Activated naive CD4-positive, alpha-beta T cell treated with anti-CD3 and anti-CD28 coated beads, Interleukin-2, amount 10 ng/mL, durations not matched to agents 7 days and 5 days (primary cell): ENCODE measurements at regions of chr12 and their contacts with region 1.

Region 1: GRCh38 chr12:7583571-7583970 is 80.0 kb upstream of the CD163 start:
- DNase-seq: no peak
- H3K4me3 Mint-ChIP-seq: no peak overlapping the region
- H3K27ac Mint-ChIP-seq: no peak overlapping the region
- H3K4me1 Mint-ChIP-seq: no peaks in the 10 kb centered on the region
- H3K27me3 Mint-ChIP-seq: peaks cover 19% of the 10 kb centered on the region

Region 2: DNA sequence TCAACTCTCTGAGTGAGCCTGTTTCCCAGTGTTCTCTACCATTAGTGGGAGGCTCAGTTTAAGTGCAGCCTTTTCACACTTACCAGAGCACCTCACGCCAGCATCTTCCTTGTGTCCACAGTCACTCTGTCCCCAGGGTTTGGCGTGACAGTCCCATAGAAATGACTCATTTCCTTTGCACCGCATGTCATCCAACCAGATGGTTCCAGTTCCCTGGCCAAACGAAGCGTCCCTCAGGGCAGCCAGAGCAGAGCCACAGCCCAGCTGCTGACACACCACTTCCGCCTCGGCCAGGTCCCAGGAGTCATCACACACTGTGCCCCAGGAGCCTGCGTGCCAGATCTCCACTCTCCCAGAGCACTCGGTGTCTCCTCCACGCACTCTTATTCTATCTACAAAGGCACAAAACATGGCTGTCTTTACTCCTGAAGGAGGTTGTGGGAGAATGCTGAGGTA is 214.3 kb before region 1 on chr12:
- CTCF ChIA-PET with region 1: no interaction called
- DNase-seq: no peak
- H3K4me3 Mint-ChIP-seq: no peak overlapping the region
- H3K27ac Mint-ChIP-seq: no peak overlapping the region
- H3K4me1 Mint-ChIP-seq: no peaks in the 10 kb centered on the region
- H3K27me3 Mint-ChIP-seq: peaks cover 17% of the 10 kb centered on the region

Region 3: GRCh38 chr12:7638760-7639555 is 55.4 kb after region 1 on chr12:
- CTCF ChIA-PET with region 1: interaction called, 17 read pairs
- DNase-seq: peak; percentile 83
- H3K4me3 Mint-ChIP-seq: peak overlapping the region; percentile 49
- H3K27ac Mint-ChIP-seq: peak overlapping the region; percentile 76
- H3K4me1 Mint-ChIP-seq: peaks cover 33% of the 10 kb centered on the region
- H3K27me3 Mint-ChIP-seq: peaks cover 14% of the 10 kb centered on the region